ENCODE measurements at regions of chr1 and their contacts with region 1.

Region 1: GRCh38 chr1:217134857-217135568 is 411.8 kb upstream of the ESRRG start:
- DNase-seq: no peak
- ATAC-seq: no peak
- H3K4me3 Mint-ChIP-seq: no peak overlapping the region
- H3K27ac Mint-ChIP-seq: no peak overlapping the region
- H3K4me1 Mint-ChIP-seq: peaks cover 3% of the 10 kb centered on the region
- H3K27me3 Mint-ChIP-seq: peaks cover 67% of the 10 kb centered on the region

Region 2: DNA sequence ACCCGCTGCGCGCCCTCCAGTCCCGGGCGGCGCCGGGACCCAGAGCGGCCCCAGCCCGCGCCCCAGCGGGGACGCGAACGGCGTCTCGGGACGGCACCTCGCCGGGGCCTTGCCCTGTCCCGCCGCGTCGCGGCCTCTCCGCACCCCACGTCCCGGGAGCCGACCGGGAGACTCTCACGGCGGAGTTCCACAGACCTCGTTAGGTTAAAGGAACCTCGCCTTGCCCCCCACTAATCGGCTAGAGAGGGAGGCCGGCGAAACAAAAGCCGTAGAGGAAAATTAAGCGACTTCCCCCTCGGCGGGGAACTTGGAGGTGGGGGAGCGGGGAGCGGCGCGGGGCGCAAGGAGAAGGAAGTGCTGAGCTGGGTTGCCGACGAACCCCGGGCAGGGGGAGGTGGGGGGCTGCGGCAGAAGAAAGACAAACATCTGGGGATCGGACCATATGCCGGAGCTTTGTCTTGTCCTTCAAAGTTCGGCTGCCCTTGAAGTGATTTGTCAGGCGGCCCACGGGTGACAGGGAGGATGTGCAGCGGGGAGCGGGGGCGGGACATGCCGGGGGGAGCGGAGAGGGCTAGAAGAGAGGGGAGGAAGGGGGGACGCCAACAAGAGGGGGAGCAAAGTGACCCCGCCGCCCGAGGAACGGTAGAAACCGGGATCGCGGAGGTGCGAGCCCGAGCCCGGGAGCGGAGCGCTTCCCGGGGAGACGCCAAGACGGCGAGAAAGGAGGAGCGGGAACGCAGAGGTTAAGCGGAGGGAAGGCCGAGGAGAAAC is 1030.1 kb after region 1 on chr1:
- CTCF ChIA-PET with region 1: no interaction called
- POLR2A ChIA-PET with region 1: no interaction called
- intact Hi-C with region 1: loop called in 1 of 2 experiments (anchors 5 kb)
- DNase-seq: peak; percentile 41
- ATAC-seq: peak; percentile 36
- H3K4me3 Mint-ChIP-seq: peak overlapping the region; percentile 39
- H3K27ac Mint-ChIP-seq: no peak overlapping the region
- H3K4me1 Mint-ChIP-seq: peaks cover 7% of the 10 kb centered on the region
- H3K27me3 Mint-ChIP-seq: peaks cover 49% of the 10 kb centered on the region

Measured in activated CD4-positive, alpha-beta T cell treated with anti-CD3 and anti-CD28 coated beads for 36 hours (primary cell).